CD4-positive, alpha-beta memory T cell (primary cell): ENCODE measurements at regions of chr1 and their contacts with region 1.

Region 1: GRCh38 chr1:1122078-1122811 is 6.4 kb upstream of the C1orf159 start:
- DNase-seq: peak; percentile 77 to 83 (median 79)
- H3K4me3 ChIP-seq: no peak overlapping the region
- H3K4me3 Mint-ChIP-seq: peak overlapping the region in 3 of 8 donors; percentile 46 to 57 (median 49)
- H3K27ac ChIP-seq: no peak overlapping the region
- H3K27ac Mint-ChIP-seq: no peak overlapping the region
- H3K4me1 ChIP-seq: peaks cover 10% of the 10 kb centered on the region
- H3K4me1 Mint-ChIP-seq: peaks cover 3 to 6% (median 6%) of the 10 kb centered on the region in 4 donors
- H3K27me3 ChIP-seq: no peaks in the 10 kb centered on the region
- H3K27me3 Mint-ChIP-seq: peaks cover 3 to 5% of the 10 kb centered on the region in 2 donors

Region 2: GRCh38 chr1:1225913-1226312 is 103.7 kb after region 1 on chr1:
- CTCF ChIA-PET with region 1: interaction called, 10 read pairs
- POLR2A ChIA-PET with region 1: interaction called, 7 read pairs
- intact Hi-C with region 1: loop called (anchors 2 kb)
- DNase-seq: no peak
- H3K4me3 ChIP-seq: no peak overlapping the region
- H3K4me3 Mint-ChIP-seq: no peak overlapping the region
- H3K27ac ChIP-seq: no peak overlapping the region
- H3K27ac Mint-ChIP-seq: peak overlapping the region in 2 of 7 donors; percentile 23 to 35
- H3K4me1 ChIP-seq: peaks cover 17% of the 10 kb centered on the region
- H3K4me1 Mint-ChIP-seq: peaks cover 12 to 43% (median 25%) of the 10 kb centered on the region in 4 donors
- H3K27me3 ChIP-seq: no peaks in the 10 kb centered on the region
- H3K27me3 Mint-ChIP-seq: no peaks in the 10 kb centered on the region

Region 3: GRCh38 chr1:1250786-1251284 is 128.6 kb after region 1 on chr1:
- CTCF ChIA-PET with region 1: interaction called, 35 read pairs
- POLR2A ChIA-PET with region 1: interaction called, 5 read pairs
- intact Hi-C with region 1: no loop called
- DNase-seq: peak; percentile 61 to 85 (median 73)
- H3K4me3 ChIP-seq: peak overlapping the region in 1 of 2 donors; percentile 10
- H3K4me3 Mint-ChIP-seq: peak overlapping the region; percentile 36 to 88 (median 75)
- H3K27ac ChIP-seq: peak overlapping the region; percentile 59
- H3K27ac Mint-ChIP-seq: peak overlapping the region; percentile 76 to 96 (median 94)
- H3K4me1 ChIP-seq: peaks cover 15% of the 10 kb centered on the region
- H3K4me1 Mint-ChIP-seq: peaks cover 4 to 24% (median 14%) of the 10 kb centered on the region in 4 donors
- H3K27me3 ChIP-seq: peaks cover 4% of the 10 kb centered on the region
- H3K27me3 Mint-ChIP-seq: no peaks in the 10 kb centered on the region

Region 4: GRCh38 chr1:1291548-1292441 is 169.6 kb after region 1 on chr1:
- CTCF ChIA-PET with region 1: interaction called, 57 read pairs
- POLR2A ChIA-PET with region 1: interaction called, 9 read pairs
- intact Hi-C with region 1: loop called (anchors 1 kb)
- DNase-seq: peak; percentile 60 to 71 (median 69)
- H3K4me3 ChIP-seq: no peak overlapping the region
- H3K4me3 Mint-ChIP-seq: no peak overlapping the region
- H3K27ac ChIP-seq: no peak overlapping the region
- H3K27ac Mint-ChIP-seq: peak overlapping the region in 1 of 7 donors; percentile 16
- H3K4me1 ChIP-seq: no peaks in the 10 kb centered on the region
- H3K4me1 Mint-ChIP-seq: peaks cover 0 to 3% (median under 1%) of the 10 kb centered on the region in 4 donors
- H3K27me3 ChIP-seq: no peaks in the 10 kb centered on the region
- H3K27me3 Mint-ChIP-seq: no peaks in the 10 kb centered on the region

Region 5: GRCh38 chr1:1337793-1338147 is 215.5 kb after region 1 on chr1:
- CTCF ChIA-PET with region 1: no interaction called
- POLR2A ChIA-PET with region 1: no interaction called
- intact Hi-C with region 1: no loop called
- DNase-seq: no peak
- H3K4me3 ChIP-seq: no peak overlapping the region
- H3K4me3 Mint-ChIP-seq: no peak overlapping the region
- H3K27ac ChIP-seq: no peak overlapping the region
- H3K27ac Mint-ChIP-seq: no peak overlapping the region
- H3K4me1 ChIP-seq: no peaks in the 10 kb centered on the region
- H3K4me1 Mint-ChIP-seq: peaks cover 0 to 8% (median 6%) of the 10 kb centered on the region in 4 donors
- H3K27me3 ChIP-seq: no peaks in the 10 kb centered on the region
- H3K27me3 Mint-ChIP-seq: no peaks in the 10 kb centered on the region